CD4-positive, alpha-beta memory T cell (primary cell): ENCODE measurements at regions of chr13 and their contacts with region 1.

Region 1: GRCh38 chr13:72727417-72728289 is at the starts of genes BORA and MZT1:
- DNase-seq: peak; percentile 93 to 96 (median 95)
- H3K4me3 ChIP-seq: peak within 1 kb of the TSS; percentile 82 to 99
- H3K4me3 Mint-ChIP-seq: peak within 1 kb of the TSS; percentile 94 to 98 (median 96)
- H3K27ac ChIP-seq: peak within 1 kb of the TSS; percentile 64
- H3K27ac Mint-ChIP-seq: peak within 1 kb of the TSS; percentile 87 to 97 (median 94)
- H3K4me1 ChIP-seq: peaks cover 32% of the 10 kb centered on the region
- H3K4me1 Mint-ChIP-seq: peaks cover 29 to 60% (median 45%) of the 10 kb centered on the region in 4 donors
- H3K27me3 ChIP-seq: no peaks in the 10 kb centered on the region
- H3K27me3 Mint-ChIP-seq: peaks cover 0 to 2% of the 10 kb centered on the region in 2 donors
- total RNA-seq, gene BORA: 6.1 to 7.2 TPM
- total RNA-seq, gene MZT1: 6.3 to 7.9 TPM

Region 2: DNA sequence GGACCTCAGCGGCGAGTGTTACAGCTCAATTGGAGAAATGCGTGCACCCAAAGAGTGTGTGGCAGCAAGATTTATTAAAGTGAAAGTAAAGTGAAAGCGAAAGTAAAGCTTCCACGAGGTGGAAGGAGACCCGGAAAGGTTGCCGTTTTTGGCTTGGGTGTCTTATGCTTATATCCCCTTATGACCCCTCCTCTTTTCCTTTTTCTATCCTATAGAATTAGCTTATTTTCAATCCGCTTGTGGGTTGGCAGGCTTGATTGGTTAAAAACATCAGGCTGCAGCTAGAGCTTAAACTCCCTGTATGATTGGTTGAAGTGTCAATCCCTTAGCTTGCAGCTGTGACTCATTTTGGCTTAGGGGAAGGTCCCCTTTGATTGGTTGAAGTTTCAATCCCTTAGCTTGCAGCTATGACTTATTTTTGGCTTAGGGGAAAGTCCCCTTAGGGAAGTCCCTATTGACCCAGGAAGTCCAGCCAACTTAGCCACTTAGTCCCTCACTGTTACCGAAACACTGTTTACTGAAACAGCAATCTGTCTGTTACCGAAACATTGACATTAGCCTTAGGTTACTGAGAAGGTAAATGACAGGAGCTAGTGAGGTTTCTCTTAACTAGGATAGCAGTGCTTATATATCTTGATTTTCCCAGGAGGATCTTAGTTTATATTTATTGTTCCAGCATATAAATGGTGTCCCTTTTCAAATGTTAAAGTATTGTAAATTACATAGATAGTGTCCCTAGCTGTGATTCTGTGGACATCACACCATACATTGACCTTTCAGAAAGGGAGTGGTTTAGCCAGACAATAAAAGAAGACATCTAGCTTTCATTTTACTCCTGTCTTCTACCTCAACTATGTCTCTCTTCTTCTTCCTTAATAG is 1436.5 kb before region 1 on chr13:
- CTCF ChIA-PET with region 1: no interaction called
- POLR2A ChIA-PET with region 1: no interaction called
- intact Hi-C with region 1: loop called (anchors 5 kb)
- DNase-seq: peak; percentile 71 to 81 (median 79)
- H3K4me3 ChIP-seq: peak overlapping the region; percentile 49 to 63
- H3K4me3 Mint-ChIP-seq: peak overlapping the region; percentile 81 to 92 (median 90)
- H3K27ac ChIP-seq: peak overlapping the region; percentile 47
- H3K27ac Mint-ChIP-seq: peak overlapping the region; percentile 83 to 98 (median 95)
- H3K4me1 ChIP-seq: peaks cover 18% of the 10 kb centered on the region
- H3K4me1 Mint-ChIP-seq: peaks cover 10 to 29% (median 22%) of the 10 kb centered on the region in 4 donors
- H3K27me3 ChIP-seq: no peaks in the 10 kb centered on the region
- H3K27me3 Mint-ChIP-seq: peaks cover 0 to 5% of the 10 kb centered on the region in 2 donors

Region 3: DNA sequence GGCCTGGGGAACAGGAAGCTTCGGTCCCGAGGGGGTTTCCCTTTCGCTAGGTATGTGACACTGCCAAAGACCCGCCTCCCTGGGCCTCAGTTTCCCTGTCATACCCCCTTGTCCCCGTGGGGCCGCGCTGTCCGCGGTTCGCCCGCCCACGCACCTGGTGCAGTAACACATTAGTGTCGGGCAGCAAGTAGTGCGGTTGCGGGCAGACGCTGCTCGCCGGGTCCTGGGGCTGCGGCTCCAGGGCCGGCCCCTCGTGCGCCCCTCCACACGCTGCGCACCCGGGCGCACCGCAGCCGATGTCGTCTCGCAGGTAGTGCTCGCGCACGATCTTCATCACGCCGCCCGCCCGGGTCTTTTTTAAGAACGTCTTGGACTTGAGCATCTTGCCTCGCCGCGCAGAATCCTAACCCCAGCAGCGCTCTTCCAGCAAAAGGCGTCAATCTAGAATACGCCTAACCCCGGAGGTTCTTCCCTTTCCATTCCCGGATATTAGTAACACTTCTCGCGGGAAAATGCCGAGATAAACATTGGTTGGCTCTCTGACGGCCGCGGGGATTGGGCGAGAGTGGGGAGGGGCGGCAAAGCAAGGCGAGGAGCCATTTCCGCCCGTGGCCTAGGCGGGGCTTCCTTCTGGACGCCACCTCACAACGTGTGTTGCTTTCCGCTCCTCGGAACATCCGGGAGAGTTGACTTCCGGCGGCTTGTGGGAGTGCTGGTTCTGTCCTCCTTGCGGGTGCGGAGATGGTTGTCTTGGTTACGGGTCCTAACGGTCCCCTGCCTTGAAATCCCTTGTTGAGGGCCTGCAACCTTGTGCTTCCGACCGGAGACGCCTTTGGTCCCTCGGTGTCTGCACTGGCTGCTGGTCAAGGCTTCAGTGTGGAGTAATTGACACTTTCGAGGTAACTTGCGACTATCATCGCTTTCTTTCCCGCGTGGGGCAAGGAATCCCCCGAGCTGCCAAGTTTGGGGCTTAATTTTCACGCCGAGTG is 54.1 kb after region 1 on chr13 and contains the starts of genes DIS3 and PIBF1:
- CTCF ChIA-PET with region 1: no interaction called
- POLR2A ChIA-PET with region 1: interaction called, 7 read pairs
- intact Hi-C with region 1: loop called (anchors 1 kb)
- DNase-seq: peak; percentile 94 to 98 (median 95)
- H3K4me3 ChIP-seq: peak within 1 kb of the TSS; percentile 92 to 96
- H3K4me3 Mint-ChIP-seq: peak within 1 kb of the TSS; percentile 99 to 100 (median 100)
- H3K27ac ChIP-seq: peak within 1 kb of the TSS; percentile 84
- H3K27ac Mint-ChIP-seq: peak within 1 kb of the TSS; percentile 90 to 100 (median 99)
- H3K4me1 ChIP-seq: peaks cover 73% of the 10 kb centered on the region
- H3K4me1 Mint-ChIP-seq: peaks cover 39 to 86% (median 65%) of the 10 kb centered on the region in 4 donors
- H3K27me3 ChIP-seq: no peaks in the 10 kb centered on the region
- H3K27me3 Mint-ChIP-seq: no peaks in the 10 kb centered on the region
- total RNA-seq, gene DIS3: 36.4 to 41.0 TPM
- total RNA-seq, gene PIBF1: 27.9 to 36.0 TPM

Region 4: GRCh38 chr13:73058736-73059459 is 331.2 kb after region 1 on chr13 and contains the start of gene KLF5:
- CTCF ChIA-PET with region 1: no interaction called
- POLR2A ChIA-PET with region 1: no interaction called
- intact Hi-C with region 1: loop called (anchors 1 kb)
- DNase-seq: peak; percentile 93 to 97 (median 94)
- H3K4me3 ChIP-seq: peak within 1 kb of the TSS; percentile 52 to 60
- H3K4me3 Mint-ChIP-seq: peak within 1 kb of the TSS; percentile 87 to 95 (median 92)
- H3K27ac ChIP-seq: no peak within 1 kb of the TSS
- H3K27ac Mint-ChIP-seq: peak within 1 kb of the TSS; percentile 72 to 94 (median 84)
- H3K4me1 ChIP-seq: peaks cover 19% of the 10 kb centered on the region
- H3K4me1 Mint-ChIP-seq: peaks cover 14 to 30% (median 18%) of the 10 kb centered on the region in 4 donors
- H3K27me3 ChIP-seq: peaks cover 11% of the 10 kb centered on the region
- H3K27me3 Mint-ChIP-seq: peaks cover 10 to 13% of the 10 kb centered on the region in 2 donors
- total RNA-seq, gene KLF5: 5.0 to 5.4 TPM